AG04450 (cell line): ENCODE measurements at regions of chr22 and their contacts with region 1.

Region 1: GRCh38 chr22:42614312-42615091 is at the start of gene POLDIP3:
- DNase-seq: peak; percentile 97
- H3K4me3 ChIP-seq: peak within 1 kb of the TSS; percentile 76
- H3K27ac ChIP-seq: peak within 1 kb of the TSS; percentile 97
- H3K27me3 ChIP-seq: no peaks in the 10 kb centered on the region
- CTCF ChIP-seq: peak; percentile 31; the same call in 1 of the 2 replicates
- polyA plus RNA-seq, gene POLDIP3: 50.6 and 55.7 TPM in 2 replicates

Region 2: GRCh38 chr22:42581762-42582716 is 32.5 kb before region 1 on chr22:
- CTCF ChIA-PET with region 1: no interaction called
- POLR2A ChIA-PET with region 1: interaction called, 18 read pairs
- DNase-seq: no peak
- H3K4me3 ChIP-seq: peak overlapping the region; percentile 72
- H3K27ac ChIP-seq: no peak overlapping the region
- H3K27me3 ChIP-seq: no peaks in the 10 kb centered on the region
- CTCF ChIP-seq: no peak

Region 3: DNA sequence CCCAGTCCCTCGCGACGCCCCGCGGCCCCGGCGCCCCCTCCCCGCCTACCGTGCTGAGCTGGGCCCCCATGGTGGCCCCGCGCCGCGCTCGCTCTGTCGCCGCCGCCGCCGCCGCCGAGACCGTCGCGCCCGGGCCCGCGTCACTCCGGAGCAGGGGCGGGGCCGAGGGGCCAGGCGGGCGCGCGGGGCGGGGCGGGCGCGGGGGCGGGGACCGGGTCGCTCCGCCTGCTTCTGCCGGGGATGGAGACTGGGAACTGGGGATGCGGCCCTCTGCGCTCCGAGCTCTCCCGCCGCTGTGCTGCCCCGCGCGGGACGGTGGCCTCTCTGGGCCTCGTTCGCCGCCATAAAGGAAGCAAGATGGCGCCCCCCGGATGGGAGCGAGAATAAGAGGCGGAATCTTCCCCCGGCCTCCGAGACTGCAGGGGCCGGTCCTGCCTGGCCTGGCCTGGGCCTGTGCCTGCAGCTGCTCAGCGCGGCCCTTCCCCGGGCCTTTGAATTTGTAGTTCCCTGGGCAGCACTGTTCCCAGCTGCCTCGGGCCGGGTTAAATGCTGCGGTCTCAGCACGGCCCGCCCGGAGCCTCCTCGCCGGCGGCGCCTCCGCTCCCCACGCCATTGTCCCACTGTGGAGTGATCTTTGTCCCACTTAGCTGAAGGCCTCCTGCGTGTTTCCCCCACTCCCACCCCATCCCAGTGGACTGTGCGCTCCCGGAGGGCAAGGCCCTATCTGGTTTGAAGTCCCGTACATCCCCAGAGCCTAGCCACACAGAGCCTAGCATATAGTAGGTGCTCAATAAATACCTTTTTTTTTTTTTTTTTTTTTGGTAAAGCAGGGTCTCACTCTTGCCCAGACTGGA is 35.0 kb after region 1 on chr22 and contains the start of gene CYB5R3:
- CTCF ChIA-PET with region 1: no interaction called
- POLR2A ChIA-PET with region 1: interaction called, 12 read pairs
- DNase-seq: no peak
- H3K4me3 ChIP-seq: peak within 1 kb of the TSS; percentile 88
- H3K27ac ChIP-seq: peak within 1 kb of the TSS; percentile 65
- H3K27me3 ChIP-seq: no peaks in the 10 kb centered on the region
- CTCF ChIP-seq: no peak
- polyA plus RNA-seq, gene CYB5R3: 110 and 151 TPM in 2 replicates

Region 4: DNA sequence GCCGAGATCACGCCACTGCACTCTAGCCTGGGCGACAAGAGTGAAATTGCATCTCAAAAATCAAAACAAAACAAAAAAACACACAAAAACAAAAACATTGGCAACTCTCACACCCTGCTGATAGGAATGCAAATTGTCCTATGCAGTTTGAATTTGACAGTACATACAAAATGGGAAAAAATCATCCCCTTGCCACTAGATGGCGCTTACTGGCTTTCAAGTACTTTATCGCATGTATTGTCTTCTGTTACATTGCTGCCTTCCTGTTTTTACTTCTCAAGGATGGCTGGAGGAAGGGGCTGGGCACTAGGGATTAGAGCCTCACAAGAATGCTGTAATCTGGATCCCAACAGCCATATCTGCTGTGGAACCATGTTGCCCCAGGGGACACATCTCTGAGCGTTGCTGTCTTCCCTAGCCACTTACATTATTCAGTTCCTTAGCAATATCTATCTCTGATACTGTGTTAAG is 165.6 kb after region 1 on chr22:
- CTCF ChIA-PET with region 1: no interaction called
- POLR2A ChIA-PET with region 1: interaction called, 11 read pairs
- DNase-seq: peak; percentile 90
- H3K4me3 ChIP-seq: no peak overlapping the region
- H3K27ac ChIP-seq: peak overlapping the region; percentile 31
- H3K27me3 ChIP-seq: no peaks in the 10 kb centered on the region
- CTCF ChIP-seq: peak; percentile 92